Aorta (tissue), 5 donors: ENCODE measurements at regions of chr2 and their contacts with region 1.

Region 1: DNA sequence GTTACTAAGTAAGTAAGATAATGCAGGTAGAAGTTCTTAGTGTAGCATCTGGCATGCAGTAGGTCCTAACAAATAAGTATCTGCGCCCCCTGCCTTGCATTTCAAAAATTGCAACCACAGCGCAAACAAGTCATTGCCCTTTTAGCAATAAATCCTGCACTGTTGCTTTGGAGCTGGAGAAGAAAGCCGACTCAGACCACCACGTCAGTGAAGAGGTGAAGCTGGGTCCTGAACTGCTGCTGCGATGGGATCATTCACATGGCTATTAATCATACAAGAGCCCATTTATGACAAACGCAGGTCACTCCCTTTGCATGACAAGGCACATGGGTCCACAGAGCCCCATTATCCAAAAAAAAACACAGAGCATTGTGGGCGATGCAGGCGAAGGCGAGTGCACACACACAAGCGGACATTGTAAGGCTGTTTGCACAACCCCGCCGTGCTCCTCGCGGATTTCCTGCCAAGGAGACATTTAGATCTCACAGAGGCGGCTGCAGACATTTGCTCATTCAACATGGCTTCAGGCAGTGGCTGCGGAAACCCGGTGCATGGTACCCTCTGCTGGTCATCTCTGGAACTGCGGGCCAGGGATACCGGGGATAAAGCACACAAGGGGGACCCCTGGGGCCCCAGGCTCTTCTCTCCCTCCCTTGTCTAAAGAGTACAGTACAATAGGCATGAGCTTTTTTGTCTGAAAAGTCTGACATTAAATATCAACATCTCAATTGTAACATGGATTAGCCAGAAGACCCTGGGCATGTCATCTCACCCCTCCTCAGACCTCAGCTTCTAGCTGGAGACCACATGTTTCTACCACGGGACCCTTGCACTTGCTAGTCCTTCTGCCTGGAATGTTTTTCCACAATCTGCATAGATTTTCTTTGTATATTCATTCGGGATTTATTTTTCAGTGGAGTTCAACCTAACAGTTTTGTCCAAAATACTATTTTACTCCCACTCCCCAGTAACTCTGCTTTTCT is 56.7 kb downstream of the CYRIA start:
- DNase-seq: peak; percentile 85 to 94
- ATAC-seq: peak; percentile 92
- H3K4me3 ChIP-seq: peak overlapping the region in 1 of 2 donors; percentile 11
- H3K27ac ChIP-seq: no peak overlapping the region
- H3K4me1 ChIP-seq: no peaks in the 10 kb centered on the region
- H3K27me3 ChIP-seq: no peaks in the 10 kb centered on the region

Region 2: DNA sequence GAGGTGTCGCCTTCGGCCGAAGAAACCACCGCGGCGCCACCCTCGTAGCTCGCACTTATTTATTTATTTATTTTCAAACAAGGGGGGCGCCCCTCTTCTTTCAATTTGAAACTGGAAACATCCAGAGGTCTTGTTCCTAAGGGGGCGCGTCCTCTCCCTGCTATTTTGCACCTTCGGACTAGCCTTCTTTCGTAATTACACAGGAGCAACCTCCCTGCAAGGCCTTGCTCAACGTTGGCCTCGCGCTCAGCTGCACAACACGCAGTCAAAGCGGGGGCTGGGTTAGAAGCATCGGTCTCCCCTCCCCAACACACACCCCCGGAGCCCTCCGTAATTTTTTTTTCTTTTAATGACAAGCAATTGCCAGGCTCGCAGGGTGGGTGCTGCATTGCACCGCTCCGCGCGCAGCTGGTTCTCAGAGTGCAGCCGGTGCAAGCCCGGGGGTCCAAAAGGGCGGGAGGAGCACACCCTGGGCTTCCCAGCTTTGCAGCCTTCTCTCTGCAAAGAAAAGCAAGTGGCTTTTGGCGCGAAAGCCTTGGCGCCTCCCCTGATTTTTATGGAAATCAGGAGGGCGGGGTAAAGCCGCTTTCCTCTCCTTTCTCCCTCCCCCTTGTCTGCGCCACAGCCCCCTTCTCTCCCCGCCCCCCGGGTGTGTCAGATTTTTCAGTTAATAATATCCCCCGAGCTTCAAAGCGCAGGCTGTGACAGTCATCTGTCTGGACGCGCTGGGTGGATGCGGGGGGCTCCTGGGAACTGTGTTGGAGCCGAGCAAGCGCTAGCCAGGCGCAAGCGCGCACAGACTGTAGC is 668.9 kb before region 1 on chr2 and contains the start of gene MYCN:
- intact Hi-C with region 1: loop called in 1 of 2 experiments (anchors 10 kb)
- DNase-seq: no peak
- ATAC-seq: no peak
- H3K4me3 ChIP-seq: peak within 1 kb of the TSS; percentile 23 to 33
- H3K27ac ChIP-seq: no peak within 1 kb of the TSS
- H3K4me1 ChIP-seq: no peaks in the 10 kb centered on the region
- H3K27me3 ChIP-seq: no peaks in the 10 kb centered on the region
- total RNA-seq, gene MYCN: 0.45 to 2.1 TPM

Region 3: GRCh38 chr2:16553226-16553625 is 55.7 kb before region 1 on chr2:
- intact Hi-C with region 1: loop called in 1 of 2 experiments (anchors 2 kb)
- DNase-seq: no peak
- ATAC-seq: no peak
- H3K4me3 ChIP-seq: no peak overlapping the region
- H3K27ac ChIP-seq: no peak overlapping the region
- H3K4me1 ChIP-seq: no peaks in the 10 kb centered on the region
- H3K27me3 ChIP-seq: no peaks in the 10 kb centered on the region

Region 4: DNA sequence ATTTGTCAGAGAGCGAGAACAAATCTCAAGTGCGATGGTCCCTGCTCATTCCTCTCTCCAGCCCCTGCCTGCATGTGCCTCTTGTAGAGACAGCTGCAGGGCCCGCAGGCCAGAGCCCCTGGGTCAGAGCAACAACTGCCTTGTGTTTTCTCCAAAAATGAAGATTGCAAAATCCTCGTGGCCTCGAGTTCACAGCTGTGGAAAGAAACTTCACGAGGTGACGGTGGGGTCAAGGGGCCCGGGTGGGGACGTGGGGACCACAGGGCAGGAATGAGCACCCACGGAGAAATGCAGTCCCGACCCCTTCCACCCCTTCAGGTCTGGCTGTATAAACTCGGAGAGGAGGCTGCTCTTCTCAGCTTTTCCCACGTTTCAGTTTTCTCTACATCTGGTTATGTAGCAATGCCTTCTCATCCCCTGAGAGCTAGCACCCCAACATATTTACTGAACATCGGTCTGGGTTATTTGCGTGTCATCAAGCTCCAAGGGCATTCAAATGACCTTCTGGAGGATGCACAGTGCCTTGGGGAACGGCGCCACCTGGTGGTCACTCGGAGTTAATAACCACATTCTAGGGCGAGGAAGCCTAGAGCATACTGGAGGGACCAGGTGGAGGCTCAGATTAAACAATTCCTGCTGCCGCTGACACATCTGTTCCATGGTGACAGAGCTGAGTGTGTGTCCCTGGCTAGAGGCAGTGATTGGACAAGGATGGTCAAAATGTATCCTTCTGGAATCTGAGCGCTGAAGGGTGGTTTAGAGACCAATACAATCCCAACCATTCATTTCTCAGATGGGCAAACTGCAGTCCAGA is 148.1 kb after region 1 on chr2:
- intact Hi-C with region 1: loop called (anchors 2 kb)
- DNase-seq: peak; percentile 80 to 93
- ATAC-seq: peak; percentile 94
- H3K4me3 ChIP-seq: no peak overlapping the region
- H3K27ac ChIP-seq: no peak overlapping the region
- H3K4me1 ChIP-seq: no peaks in the 10 kb centered on the region
- H3K27me3 ChIP-seq: no peaks in the 10 kb centered on the region